ENCODE measurements at regions of chr3 and their contacts with region 1.

Region 1: DNA sequence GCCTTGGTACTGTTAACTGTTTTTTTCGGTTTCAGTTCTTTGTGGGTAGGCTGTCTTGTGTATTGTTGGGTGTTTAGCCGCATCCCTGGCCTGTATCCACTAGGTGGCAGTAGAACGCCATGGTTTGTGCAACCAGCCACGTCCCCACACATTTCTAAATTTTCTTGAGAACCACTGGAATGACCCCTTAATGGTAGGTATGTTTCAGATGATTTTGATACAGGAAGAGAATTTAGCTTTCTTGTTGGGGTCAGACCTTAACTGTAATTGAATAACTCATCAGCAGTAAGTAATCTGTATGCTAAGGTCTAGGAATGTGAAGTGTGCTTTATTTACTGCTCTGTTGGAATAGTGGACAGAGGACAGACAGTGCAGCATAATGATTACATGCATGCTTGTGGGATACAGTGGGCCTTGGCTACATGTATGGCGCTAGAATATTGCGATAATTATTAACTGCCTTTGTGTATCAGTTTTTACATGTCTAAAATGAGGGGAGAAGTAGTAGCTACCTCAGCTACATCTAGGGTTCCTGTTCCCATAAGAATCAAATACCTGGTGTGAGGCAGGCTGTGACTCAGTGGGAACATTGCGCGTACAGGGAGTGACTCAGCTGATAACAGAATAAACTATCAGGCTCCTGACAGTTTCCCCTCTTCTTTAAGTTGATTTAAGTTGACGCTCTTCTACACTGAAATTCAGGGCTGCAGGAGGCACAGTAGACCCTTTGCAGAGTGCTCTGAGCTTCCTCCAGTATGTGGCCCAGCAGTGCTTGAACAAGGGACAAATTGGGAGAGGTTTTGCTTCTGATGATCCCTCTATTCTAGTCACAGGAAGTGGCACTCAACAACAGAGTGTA is 25.0 kb upstream of the GPR171 start:
- DNase-seq: peak; percentile 89
- ATAC-seq: peak; percentile 84
- H3K4me3 Mint-ChIP-seq: peak overlapping the region; percentile 19
- H3K27ac Mint-ChIP-seq: peak overlapping the region; percentile 82
- H3K4me1 Mint-ChIP-seq: peaks cover 65% of the 10 kb centered on the region
- H3K27me3 Mint-ChIP-seq: no peaks in the 10 kb centered on the region

Region 2: DNA sequence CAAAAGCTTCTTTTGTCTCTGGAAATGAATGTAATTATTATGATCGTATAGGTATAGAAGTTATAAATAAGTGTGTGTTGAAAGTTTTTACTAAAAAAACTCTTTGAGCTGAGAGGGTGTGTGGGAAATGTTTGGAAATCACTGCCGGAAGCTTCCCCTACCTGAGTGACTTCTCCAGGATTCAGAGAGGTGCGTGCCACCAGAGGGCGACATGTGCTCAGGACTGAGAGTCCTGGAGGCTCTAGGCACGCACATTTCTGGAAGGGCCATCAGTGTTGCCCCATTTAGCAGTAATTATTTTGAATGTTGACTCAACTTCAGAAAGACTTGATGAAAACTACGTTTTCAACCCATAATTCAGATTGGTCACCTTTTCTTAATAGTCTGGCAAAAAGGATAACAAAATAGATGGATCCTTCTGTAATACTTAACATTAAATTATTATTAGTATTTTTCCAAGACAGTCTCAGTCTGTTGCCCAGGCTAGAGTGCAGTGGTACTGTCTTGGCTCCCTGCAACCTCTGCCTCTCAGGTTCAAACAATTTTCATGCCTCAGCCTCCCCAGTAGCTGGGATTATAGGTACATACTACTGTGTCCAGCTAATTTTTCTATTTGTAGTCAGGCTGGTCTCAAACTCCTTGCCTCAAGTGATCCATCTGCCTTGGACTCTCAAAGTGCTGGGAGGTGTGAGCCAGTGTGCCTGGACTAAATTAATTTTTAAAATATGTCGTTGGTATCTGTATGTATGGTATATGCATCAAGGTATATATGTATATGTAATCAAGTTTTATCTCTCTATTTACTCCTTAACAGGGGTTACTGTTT is 59.6 kb before region 1 on chr3:
- CTCF ChIA-PET with region 1: interaction called, 195 read pairs
- POLR2A ChIA-PET with region 1: no interaction called
- DNase-seq: peak; percentile 89
- ATAC-seq: peak; percentile 62
- H3K4me3 Mint-ChIP-seq: no peak overlapping the region
- H3K27ac Mint-ChIP-seq: no peak overlapping the region
- H3K4me1 Mint-ChIP-seq: peaks cover 49% of the 10 kb centered on the region
- H3K27me3 Mint-ChIP-seq: no peaks in the 10 kb centered on the region

Region 3: DNA sequence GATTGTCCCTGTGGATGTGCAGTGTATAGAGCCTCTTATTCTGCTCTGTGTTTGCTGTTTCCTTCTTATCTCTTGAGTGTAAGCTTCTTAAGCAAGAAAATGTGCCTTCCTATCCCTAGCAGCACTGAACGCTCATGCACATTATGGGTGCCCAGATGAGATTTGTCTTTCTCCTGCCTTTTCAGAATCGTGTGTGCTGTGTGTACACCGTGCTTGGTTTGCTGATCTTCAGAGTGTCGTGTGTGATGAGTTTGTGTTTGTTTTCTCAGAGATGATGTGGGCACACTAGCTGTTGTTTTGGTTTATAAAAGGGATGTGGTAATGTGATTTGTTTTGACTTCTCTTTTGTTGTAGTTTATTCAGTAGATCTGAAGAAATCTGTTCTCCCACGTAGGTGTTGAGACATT is 44.8 kb before region 1 on chr3:
- CTCF ChIA-PET with region 1: interaction called, 11 read pairs
- POLR2A ChIA-PET with region 1: interaction called, 6 read pairs
- DNase-seq: peak; percentile 38
- ATAC-seq: peak; percentile 79
- H3K4me3 Mint-ChIP-seq: peak overlapping the region; percentile 58
- H3K27ac Mint-ChIP-seq: peak overlapping the region; percentile 81
- H3K4me1 Mint-ChIP-seq: peaks cover 47% of the 10 kb centered on the region
- H3K27me3 Mint-ChIP-seq: no peaks in the 10 kb centered on the region

Region 4: GRCh38 chr3:151210676-151211381 is 17.2 kb before region 1 on chr3:
- CTCF ChIA-PET with region 1: interaction called, 65 read pairs
- POLR2A ChIA-PET with region 1: interaction called, 3 read pairs
- DNase-seq: peak; percentile 43
- ATAC-seq: peak; percentile 66
- H3K4me3 Mint-ChIP-seq: peak overlapping the region; percentile 74
- H3K27ac Mint-ChIP-seq: peak overlapping the region; percentile 86
- H3K4me1 Mint-ChIP-seq: peaks cover 57% of the 10 kb centered on the region
- H3K27me3 Mint-ChIP-seq: no peaks in the 10 kb centered on the region

Region 5: GRCh38 chr3:151265866-151266265 is 37.8 kb after region 1 on chr3:
- CTCF ChIA-PET with region 1: interaction called, 62 read pairs
- POLR2A ChIA-PET with region 1: interaction called, 3 read pairs
- DNase-seq: no peak
- ATAC-seq: no peak
- H3K4me3 Mint-ChIP-seq: no peak overlapping the region
- H3K27ac Mint-ChIP-seq: no peak overlapping the region
- H3K4me1 Mint-ChIP-seq: peaks cover 38% of the 10 kb centered on the region
- H3K27me3 Mint-ChIP-seq: no peaks in the 10 kb centered on the region

Region 6: DNA sequence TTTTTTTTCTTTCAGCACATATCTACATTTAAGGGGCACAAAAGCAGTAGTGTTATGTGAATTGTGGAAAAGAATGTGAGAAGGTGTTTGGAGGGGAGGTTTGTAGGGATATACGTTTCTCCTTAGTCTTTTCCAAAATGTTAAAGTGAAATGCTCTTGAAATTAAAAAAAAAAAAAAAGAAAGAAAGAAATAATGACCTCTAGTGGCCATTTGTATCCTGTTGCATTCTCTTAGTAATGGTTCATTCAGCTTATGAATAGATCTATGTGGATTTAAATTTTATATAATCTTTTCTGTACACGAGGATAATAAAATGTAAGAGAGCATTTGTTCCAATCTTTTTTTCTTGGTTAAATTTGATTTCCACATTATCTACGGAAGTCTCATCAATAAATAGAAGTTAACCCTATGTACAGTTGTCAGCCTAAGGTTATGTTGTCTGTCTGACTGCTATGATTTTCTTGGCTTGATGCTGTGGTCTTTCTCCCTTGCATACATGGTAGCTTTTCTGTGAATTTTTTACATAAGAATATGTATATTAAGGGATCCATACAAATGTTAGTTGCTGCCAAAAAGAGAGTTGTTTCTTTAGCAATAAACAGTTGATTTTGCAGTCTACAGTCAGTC is 99.6 kb after region 1 on chr3:
- CTCF ChIA-PET with region 1: interaction called, 32 read pairs
- POLR2A ChIA-PET with region 1: no interaction called
- DNase-seq: no peak
- ATAC-seq: no peak
- H3K4me3 Mint-ChIP-seq: no peak overlapping the region
- H3K27ac Mint-ChIP-seq: no peak overlapping the region
- H3K4me1 Mint-ChIP-seq: peaks cover 8% of the 10 kb centered on the region
- H3K27me3 Mint-ChIP-seq: peaks cover 4% of the 10 kb centered on the region

Region 7: GRCh38 chr3:151838583-151839312 is 610.7 kb after region 1 on chr3:
- CTCF ChIA-PET with region 1: interaction called, 25 read pairs
- POLR2A ChIA-PET with region 1: no interaction called
- DNase-seq: peak; percentile 61
- ATAC-seq: peak; percentile 88
- H3K4me3 Mint-ChIP-seq: no peak overlapping the region
- H3K27ac Mint-ChIP-seq: no peak overlapping the region
- H3K4me1 Mint-ChIP-seq: no peaks in the 10 kb centered on the region
- H3K27me3 Mint-ChIP-seq: peaks cover 30% of the 10 kb centered on the region

Measured in activated CD8-positive, alpha-beta T cell treated with anti-CD3 and anti-CD28 coated beads, Interleukin-2, amount 10 ng/mL, durations not matched to agents 7 days and 5 days (primary cell).